HepG2 (cell line): ENCODE measurements at regions of chr11 and their contacts with region 1.

Region 1: GRCh38 chr11:56841210-56841810 is 92.8 kb upstream of the OR9G4 start:
- DNase-seq: peak; percentile 52
- ATAC-seq: peak; percentile 63
- H3K4me3 ChIP-seq: no peak overlapping the region
- H3K27ac ChIP-seq: no peak overlapping the region
- H3K4me1 ChIP-seq: no peaks in the 10 kb centered on the region
- H3K27me3 ChIP-seq: peaks cover 0 to 7% of the 10 kb centered on the region in 2 experiments; a peak in 1 of 5 replicates
- CTCF ChIP-seq: peak; percentile 81
- EP300 ChIP-seq: no peak
- POLR2A ChIP-seq: no peak
- RAD21 ChIP-seq: peak; percentile 48; the same call in 1 of the 2 replicates

Region 2: DNA sequence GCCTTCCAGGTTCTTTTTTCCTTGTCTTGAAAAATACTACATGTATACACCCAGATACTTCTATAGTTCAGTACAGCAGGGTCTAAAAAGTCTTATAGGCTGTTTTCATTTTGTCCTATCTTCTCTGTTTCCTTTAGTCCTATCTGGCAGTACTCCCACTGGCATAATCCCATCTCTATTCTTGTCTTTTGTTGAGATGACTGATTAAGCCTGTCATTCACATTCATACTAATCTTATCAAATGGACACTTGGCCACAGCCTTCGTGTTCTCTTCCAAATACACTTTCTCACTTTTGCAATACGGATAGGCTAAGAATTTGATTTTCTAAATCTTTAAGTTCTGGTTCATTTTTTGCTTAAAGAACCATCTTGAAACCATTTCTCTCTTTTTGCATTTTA is 190.2 kb after region 1 on chr11:
- CTCF ChIA-PET with region 1: no interaction called
- POLR2A ChIA-PET with region 1: no interaction called
- in situ Hi-C with region 1: no loop called
- intact Hi-C with region 1: no loop called
- DNase-seq: no peak
- ATAC-seq: no peak
- H3K4me3 ChIP-seq: no peak overlapping the region
- H3K27ac ChIP-seq: no peak overlapping the region
- H3K4me1 ChIP-seq: no peaks in the 10 kb centered on the region
- H3K27me3 ChIP-seq: no peaks in the 10 kb centered on the region; a peak in 1 of 5 replicates
- CTCF ChIP-seq: no peak
- EP300 ChIP-seq: no peak
- POLR2A ChIP-seq: no peak
- RAD21 ChIP-seq: no peak

Region 3: GRCh38 chr11:57116654-57117053 is 275.3 kb after region 1 on chr11:
- CTCF ChIA-PET with region 1: no interaction called
- POLR2A ChIA-PET with region 1: no interaction called
- in situ Hi-C with region 1: loop called (anchors 10 kb)
- intact Hi-C with region 1: loop called (anchors 1 kb)
- DNase-seq: peak; percentile 25
- ATAC-seq: peak; percentile 90
- H3K4me3 ChIP-seq: no peak overlapping the region
- H3K27ac ChIP-seq: no peak overlapping the region
- H3K4me1 ChIP-seq: no peaks in the 10 kb centered on the region
- H3K27me3 ChIP-seq: no peaks in the 10 kb centered on the region; a peak in 1 of 5 replicates
- CTCF ChIP-seq: peak; percentile 68
- EP300 ChIP-seq: no peak
- POLR2A ChIP-seq: no peak
- RAD21 ChIP-seq: peak; percentile 29; the same call in 1 of the 2 replicates

Region 4: GRCh38 chr11:57124917-57125316 is 283.6 kb after region 1 on chr11:
- CTCF ChIA-PET with region 1: no interaction called
- POLR2A ChIA-PET with region 1: no interaction called
- in situ Hi-C with region 1: loop called (anchors 10 kb)
- intact Hi-C with region 1: no loop called
- DNase-seq: no peak
- ATAC-seq: no peak
- H3K4me3 ChIP-seq: no peak overlapping the region
- H3K27ac ChIP-seq: no peak overlapping the region
- H3K4me1 ChIP-seq: no peaks in the 10 kb centered on the region
- H3K27me3 ChIP-seq: peaks cover 0 to 2% of the 10 kb centered on the region in 2 experiments; a peak in 2 of 5 replicates
- CTCF ChIP-seq: no peak
- EP300 ChIP-seq: no peak
- POLR2A ChIP-seq: no peak
- RAD21 ChIP-seq: no peak

Region 5: DNA sequence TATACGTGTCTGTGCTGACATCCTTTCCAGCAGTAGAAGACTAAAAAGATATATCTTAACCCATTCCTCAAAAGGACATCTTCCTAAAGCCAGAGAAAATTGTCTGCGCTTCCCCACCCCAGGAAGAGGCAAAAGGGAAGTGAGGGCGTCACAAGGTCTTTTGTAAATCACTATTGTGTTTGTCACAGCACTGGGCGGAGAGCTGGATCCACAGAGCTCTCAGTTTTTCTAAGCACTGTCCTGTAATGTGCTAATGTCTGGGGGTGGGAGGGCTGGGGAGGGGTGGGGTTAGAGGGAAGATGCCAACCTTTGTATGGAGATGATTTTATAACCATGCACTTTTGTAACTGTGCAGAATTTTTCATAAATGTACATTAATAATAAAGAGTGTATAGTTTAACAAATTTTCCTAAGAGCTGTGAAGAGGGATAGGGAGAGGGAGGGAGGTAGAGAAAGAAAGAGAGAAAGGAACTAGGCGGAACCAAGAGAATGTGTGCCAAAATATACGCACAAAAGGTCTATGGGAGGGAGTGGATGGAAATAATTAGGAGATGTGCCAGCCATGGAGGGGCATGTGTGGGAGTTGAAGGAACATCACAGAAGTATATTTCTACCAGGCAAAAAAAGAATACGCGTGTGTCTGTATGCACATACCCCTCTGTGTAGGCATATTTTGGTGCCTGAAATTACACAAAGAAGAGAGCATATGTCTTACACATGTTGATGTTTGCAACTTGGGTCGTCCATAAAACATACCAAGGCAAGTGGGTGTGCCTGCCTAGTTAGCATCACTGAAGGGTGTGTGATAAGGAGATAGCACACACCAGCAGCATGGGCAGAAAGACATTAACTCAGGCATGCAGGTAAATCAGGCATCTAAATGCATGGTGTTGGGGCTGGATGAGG is 350.3 kb after region 1 on chr11:
- CTCF ChIA-PET with region 1: no interaction called
- POLR2A ChIA-PET with region 1: no interaction called
- in situ Hi-C with region 1: no loop called
- intact Hi-C with region 1: no loop called
- DNase-seq: no peak
- ATAC-seq: no peak
- H3K4me3 ChIP-seq: no peak overlapping the region
- H3K27ac ChIP-seq: no peak overlapping the region
- H3K4me1 ChIP-seq: no peaks in the 10 kb centered on the region
- H3K27me3 ChIP-seq: no peaks in the 10 kb centered on the region; a peak in 1 of 5 replicates
- CTCF ChIP-seq: no peak
- EP300 ChIP-seq: no peak
- POLR2A ChIP-seq: no peak
- RAD21 ChIP-seq: no peak

Region 6: DNA sequence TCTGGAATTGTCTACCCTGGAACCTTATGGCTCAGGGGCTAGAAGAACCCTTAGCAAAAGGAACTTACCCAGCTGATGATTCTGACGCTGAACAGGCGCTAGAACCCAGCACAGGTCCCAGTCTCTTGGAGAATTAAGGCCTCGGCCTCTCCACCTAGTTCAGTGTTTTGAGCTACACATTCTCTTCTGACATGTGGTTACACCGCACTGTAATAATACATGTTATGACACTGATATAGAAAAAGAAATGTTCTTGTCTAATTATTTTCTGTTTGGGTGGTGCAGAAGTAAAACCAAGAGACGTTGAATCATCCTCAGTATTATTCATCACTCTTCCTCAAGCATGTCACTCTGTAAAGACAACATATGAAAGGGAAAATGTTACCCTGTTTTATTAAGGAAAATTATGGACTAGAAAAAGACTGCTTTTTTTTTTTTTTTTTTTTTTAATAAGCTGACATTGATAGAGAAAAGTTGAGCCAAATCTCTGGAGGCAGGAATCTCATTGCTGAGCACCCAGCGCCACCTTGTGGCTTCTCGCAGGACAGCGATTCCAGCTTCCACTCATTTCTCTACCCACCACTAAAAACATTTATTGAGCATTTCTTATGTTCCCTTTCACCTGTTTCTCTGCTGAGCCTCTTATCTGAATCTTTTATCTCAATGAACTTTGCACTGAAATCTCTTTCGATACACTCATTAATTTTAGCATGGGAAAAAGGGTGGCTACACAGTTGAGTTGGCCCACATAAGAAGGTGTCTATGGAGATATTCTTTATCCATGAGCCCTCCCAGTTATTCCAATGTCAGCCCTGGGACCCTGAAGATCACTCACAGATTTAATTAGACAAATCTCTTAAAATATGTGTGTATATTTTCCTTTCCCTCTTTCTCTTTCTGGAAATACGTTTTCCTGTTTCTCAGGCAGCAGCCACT is 408.3 kb after region 1 on chr11:
- CTCF ChIA-PET with region 1: interaction called, 42 read pairs
- POLR2A ChIA-PET with region 1: no interaction called
- in situ Hi-C with region 1: loop called (anchors 5 kb)
- intact Hi-C with region 1: loop called (anchors 1 kb)
- DNase-seq: peak; percentile 23
- ATAC-seq: peak; percentile 76
- H3K4me3 ChIP-seq: no peak overlapping the region
- H3K27ac ChIP-seq: no peak overlapping the region
- H3K4me1 ChIP-seq: no peaks in the 10 kb centered on the region
- H3K27me3 ChIP-seq: no peaks in the 10 kb centered on the region
- CTCF ChIP-seq: peak; percentile 71
- EP300 ChIP-seq: no peak
- POLR2A ChIP-seq: no peak
- RAD21 ChIP-seq: no peak

Region 7: DNA sequence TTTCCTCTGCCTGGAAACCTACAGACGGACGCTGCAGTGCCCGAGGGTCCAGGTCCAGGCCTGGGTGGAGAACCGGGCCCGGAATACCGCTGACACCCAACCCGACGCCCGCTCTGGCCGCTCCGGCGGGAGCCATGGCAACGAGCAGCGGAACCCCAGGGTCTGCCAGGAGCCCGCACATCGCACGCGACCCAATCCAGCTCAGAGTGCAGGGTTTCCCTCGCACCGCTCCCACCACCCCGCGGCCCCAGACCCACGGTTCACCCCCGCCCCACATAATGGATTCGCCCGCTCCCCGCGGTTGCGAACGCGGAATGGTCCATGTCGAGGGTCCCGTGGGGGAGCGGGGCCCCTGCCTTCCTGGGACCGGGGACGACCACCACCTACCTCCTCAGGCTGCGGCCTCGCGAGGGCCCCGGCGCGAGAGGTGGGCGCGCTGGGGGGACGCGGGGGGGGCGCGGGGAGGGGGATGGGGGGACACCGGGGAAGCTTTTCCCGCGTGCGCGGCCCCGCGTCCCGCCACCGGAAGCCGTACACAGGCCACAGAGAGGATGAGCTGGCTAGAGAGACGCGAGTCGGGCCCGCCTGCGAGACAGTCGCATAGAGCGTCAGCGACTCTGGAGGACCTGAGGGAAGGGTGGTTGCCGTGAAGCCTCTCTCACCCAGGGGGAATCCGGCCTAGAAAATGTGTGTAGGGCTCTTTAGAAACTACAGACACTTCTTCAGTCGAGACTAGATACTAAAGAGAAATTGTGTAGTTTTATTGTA is 494.2 kb after region 1 on chr11 and contains the start of gene SSRP1:
- CTCF ChIA-PET with region 1: no interaction called
- POLR2A ChIA-PET with region 1: no interaction called
- in situ Hi-C with region 1: no loop called
- intact Hi-C with region 1: loop called (anchors 2 kb)
- DNase-seq: peak; percentile 79
- ATAC-seq: peak; percentile 98
- H3K4me3 ChIP-seq: peak within 1 kb of the TSS; percentile 61 to 85 (median 80)
- H3K27ac ChIP-seq: peak within 1 kb of the TSS; percentile 65
- H3K4me1 ChIP-seq: peaks cover 37% of the 10 kb centered on the region
- H3K27me3 ChIP-seq: 0 out of 5 replicates have a peak, but pooled peaks cover 0 to 6% of the 10 kb centered on the region in 2 experiments
- CTCF ChIP-seq: peak; percentile 69
- EP300 ChIP-seq: 0 out of 4 replicates have a peak, but pooled peaks of 1 of the 2 experiments have one; percentile 7
- POLR2A ChIP-seq: peak; percentile 47 to 58
- RAD21 ChIP-seq: no peak
- total RNA-seq, gene SSRP1: 129 and 175 TPM in 2 replicates